Activated naive CD4-positive, alpha-beta T cell treated with anti-CD3 and anti-CD28 coated beads for 36 hours (primary cell): ENCODE measurements at regions of chr11 and their contacts with region 1.

Region 1: GRCh38 chr11:63916837-63917691 is at the start of gene RCOR2:
- DNase-seq: peak; percentile 63
- H3K4me3 Mint-ChIP-seq: peak within 1 kb of the TSS; percentile 79
- H3K27ac Mint-ChIP-seq: no peak within 1 kb of the TSS
- H3K4me1 Mint-ChIP-seq: peaks cover 15% of the 10 kb centered on the region
- H3K27me3 Mint-ChIP-seq: no peaks in the 10 kb centered on the region
- total RNA-seq, gene RCOR2: 0.17 to 0.19 TPM

Region 2: DNA sequence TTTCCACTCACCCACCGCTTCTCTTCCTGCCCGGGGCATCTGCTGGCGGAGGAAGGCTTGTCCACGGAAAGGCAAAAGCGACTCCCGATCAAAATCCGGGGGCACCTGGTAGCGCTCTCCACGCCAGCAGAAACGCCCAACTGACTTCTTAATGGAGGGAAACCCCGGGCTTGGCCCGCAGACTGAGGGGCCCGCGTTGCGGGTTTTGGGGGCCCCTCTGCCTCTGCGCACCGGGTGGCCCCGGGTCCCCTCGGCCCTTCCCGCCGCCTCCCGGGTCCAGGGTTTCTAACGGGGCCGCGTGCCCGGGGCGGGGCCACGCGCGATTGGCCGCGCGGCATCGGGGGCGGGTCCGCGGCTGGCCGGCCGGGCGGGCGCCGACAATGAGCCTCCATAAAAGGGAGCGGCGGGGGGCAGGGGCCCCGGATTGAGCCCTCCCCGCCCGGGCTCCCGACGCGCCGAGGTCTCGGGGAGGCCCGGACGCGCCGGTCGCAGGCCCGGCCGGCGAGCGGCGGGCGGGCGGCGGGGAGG is 104.0 kb before region 1 on chr11 and contains the start of gene SPINDOC:
- CTCF ChIA-PET with region 1: no interaction called
- intact Hi-C with region 1: no loop called
- DNase-seq: peak; percentile 66
- H3K4me3 Mint-ChIP-seq: peak within 1 kb of the TSS; percentile 74
- H3K27ac Mint-ChIP-seq: no peak within 1 kb of the TSS
- H3K4me1 Mint-ChIP-seq: peaks cover 18% of the 10 kb centered on the region
- H3K27me3 Mint-ChIP-seq: peaks cover 3% of the 10 kb centered on the region
- total RNA-seq, gene SPINDOC: 15.3 to 15.4 TPM

Region 3: GRCh38 chr11:63938479-63939396 is 21.7 kb after region 1 on chr11 and contains the start of gene NAA40:
- CTCF ChIA-PET with region 1: interaction called, 11 read pairs
- intact Hi-C with region 1: loop called (anchors 1 kb)
- DNase-seq: peak; percentile 90
- H3K4me3 Mint-ChIP-seq: peak within 1 kb of the TSS; percentile 77
- H3K27ac Mint-ChIP-seq: peak within 1 kb of the TSS; percentile 52
- H3K4me1 Mint-ChIP-seq: peaks cover 13% of the 10 kb centered on the region
- H3K27me3 Mint-ChIP-seq: no peaks in the 10 kb centered on the region
- total RNA-seq, gene NAA40: 10.3 to 13.2 TPM

Region 4: DNA sequence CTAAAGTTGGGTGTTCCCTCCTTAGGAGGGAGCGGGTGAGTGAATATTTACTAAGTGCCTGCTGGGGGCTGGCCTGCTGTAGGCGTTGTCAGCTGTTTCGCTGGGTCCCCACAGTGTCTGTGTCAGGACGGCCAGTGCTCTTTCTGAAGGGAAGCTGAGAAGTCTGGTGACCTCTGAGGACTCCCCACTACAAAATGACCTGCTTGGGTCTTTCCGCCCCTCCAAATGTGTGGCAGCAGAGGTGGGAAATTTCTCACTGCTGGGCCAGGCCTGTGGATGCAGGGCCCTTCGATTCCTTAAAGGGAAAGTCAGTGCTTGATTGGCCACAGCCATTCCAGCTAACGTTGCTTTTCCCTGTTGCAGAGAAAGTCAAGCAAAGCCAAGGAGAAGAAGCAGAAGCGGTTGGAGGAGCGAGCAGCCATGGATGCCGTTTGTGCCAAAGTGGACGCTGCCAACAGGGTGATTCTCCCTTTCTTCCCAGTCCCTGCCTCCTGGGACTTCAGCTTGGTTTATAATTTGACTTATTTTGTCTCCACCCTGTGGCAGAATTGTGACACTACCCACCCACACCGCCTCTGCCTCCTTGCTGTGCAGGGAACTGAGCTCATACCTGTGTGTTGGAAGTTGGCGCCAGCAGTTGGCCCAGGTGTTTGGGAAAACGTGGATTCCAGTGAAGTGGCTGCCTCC is 28.6 kb after region 1 on chr11:
- CTCF ChIA-PET with region 1: interaction called, 11 read pairs
- intact Hi-C with region 1: no loop called
- DNase-seq: peak; percentile 65
- H3K4me3 Mint-ChIP-seq: no peak overlapping the region
- H3K27ac Mint-ChIP-seq: no peak overlapping the region
- H3K4me1 Mint-ChIP-seq: peaks cover 3% of the 10 kb centered on the region
- H3K27me3 Mint-ChIP-seq: no peaks in the 10 kb centered on the region

Region 5: GRCh38 chr11:64007629-64008282 is 90.7 kb after region 1 on chr11:
- CTCF ChIA-PET with region 1: no interaction called
- intact Hi-C with region 1: no loop called
- DNase-seq: no peak
- H3K4me3 Mint-ChIP-seq: no peak overlapping the region
- H3K27ac Mint-ChIP-seq: no peak overlapping the region
- H3K4me1 Mint-ChIP-seq: peaks cover 13% of the 10 kb centered on the region
- H3K27me3 Mint-ChIP-seq: peaks cover 30% of the 10 kb centered on the region